Left cardiac atrium (tissue), 4 donors: ENCODE measurements at regions of chr12 and their contacts with region 1.

Region 1: GRCh38 chr12:123150744-123151456 is at the start of gene PITPNM2:
- DNase-seq: peak; percentile 69
- ATAC-seq: peak; percentile 80 to 93
- total RNA-seq, gene PITPNM2: 13.1 to 22.2 TPM

Region 2: DNA sequence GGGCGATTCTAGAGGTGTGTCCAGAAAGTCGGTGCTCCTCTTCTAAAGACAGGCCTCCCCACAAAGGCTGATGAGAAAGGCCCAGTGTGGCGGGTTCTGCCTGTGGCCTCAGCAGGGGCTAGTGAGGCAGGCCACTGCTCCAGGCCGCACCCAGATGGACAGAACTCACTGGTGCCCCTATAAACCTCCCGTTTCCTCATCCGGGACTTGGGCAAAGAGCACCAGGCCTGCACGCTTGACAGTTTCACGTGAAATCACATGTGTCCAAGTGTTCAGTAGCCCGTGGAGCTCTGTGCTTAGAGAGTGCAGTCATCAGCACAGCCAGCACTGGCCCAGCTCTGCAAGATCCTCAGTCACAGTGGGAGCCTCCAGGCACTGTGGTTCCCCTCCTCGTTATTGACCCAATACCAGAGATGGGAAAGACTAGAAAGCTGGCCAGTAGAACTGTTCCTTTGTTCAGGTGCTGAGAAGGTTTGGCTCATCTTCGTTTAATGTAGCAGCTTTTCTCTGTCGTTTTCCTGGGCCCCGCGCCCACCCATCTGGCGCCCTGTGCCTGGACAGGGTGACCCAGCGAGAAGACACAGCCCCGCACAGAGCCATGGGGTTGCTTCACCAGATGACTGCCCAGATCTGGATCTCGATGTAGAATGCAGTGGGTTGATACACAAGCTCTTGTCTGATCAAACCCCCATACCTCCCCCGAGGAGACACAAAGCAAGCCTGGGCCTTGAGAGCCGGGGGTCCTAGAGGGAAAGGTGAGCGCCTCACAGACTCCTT is 1003.2 kb before region 1 on chr12:
- intact Hi-C with region 1: no loop called
- DNase-seq: no peak
- ATAC-seq: peak in 1 of 2 donors; percentile 9

Region 3: GRCh38 chr12:122984612-122985337 is 166.1 kb before region 1 on chr12:
- intact Hi-C with region 1: loop called in 1 of 2 experiments (anchors 5 kb)
- DNase-seq: peak; percentile 59
- ATAC-seq: peak; percentile 13 to 18

Region 4: DNA sequence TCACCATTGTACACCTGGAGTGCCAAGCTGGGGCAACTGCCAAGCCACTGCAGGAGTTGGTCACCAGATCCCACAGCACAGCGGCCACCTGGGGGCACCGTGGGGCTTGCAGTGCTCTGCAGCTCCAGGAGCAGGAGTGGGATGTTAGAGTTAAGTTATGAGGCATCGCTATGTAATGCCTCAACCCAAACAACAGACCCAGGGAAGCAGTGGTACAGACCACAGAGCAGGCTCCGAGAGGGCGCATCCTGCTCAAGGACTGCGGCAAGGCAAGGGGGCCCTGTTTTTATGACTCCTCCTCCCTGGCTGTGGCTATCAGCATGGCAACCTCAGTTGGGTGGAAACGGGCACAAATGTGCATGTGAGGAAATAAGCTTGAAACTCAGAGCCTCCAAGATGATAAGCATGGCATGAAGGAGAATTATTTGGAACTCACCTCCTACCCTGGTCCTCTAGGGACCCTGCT is 107.3 kb before region 1 on chr12:
- intact Hi-C with region 1: loop called (anchors 2 to 5 kb)
- DNase-seq: peak; percentile 85
- ATAC-seq: peak; percentile 91 to 93

Region 5: DNA sequence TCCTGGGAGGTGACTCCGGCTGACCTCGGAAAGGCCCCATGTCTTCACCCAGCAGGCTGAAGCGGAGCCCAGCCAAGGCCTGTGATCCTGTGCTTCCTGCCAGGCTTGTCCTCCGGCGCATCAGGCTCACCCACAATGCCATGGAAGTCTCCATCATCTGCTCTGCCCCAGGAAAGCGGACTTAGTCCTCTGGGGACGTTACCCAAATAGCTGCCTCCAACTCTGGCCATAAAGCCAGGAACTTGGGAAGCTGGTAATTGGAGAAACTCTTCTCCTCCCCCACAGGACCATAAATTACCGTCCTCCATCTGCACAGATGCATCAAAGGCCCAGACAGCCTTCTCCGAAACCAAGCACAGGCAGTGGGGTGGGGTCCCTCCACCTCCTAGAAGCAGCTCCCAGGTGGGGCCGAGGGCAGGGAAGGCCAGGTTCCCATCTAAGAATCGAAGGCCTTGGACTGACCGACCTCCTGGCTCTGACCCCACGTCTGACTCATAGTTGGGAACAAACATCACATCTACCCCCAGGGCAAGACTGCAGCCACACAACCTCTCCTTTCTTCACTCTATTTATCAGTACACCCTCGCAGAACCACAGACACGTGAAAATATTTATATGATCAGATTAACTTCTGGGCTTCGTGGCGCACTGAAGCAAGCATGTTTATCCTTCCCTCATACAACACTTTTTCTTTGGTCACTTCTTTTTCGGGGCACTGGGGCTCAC is 56.4 kb before region 1 on chr12:
- intact Hi-C with region 1: loop called in 1 of 2 experiments (anchors 5 kb)
- DNase-seq: peak; percentile 66
- ATAC-seq: peak; percentile 27 to 60

Region 6: GRCh38 chr12:123200414-123200813 is 49.5 kb after region 1 on chr12:
- intact Hi-C with region 1: loop called in 1 of 2 experiments (anchors 2 kb)
- DNase-seq: no peak
- ATAC-seq: no peak

Region 7: GRCh38 chr12:123250484-123251383 is 99.8 kb after region 1 on chr12:
- intact Hi-C with region 1: no loop called
- DNase-seq: no peak
- ATAC-seq: peak; percentile 43 to 44